Astrocyte of the spinal cord (primary cell): ENCODE measurements at regions of chr6 and their contacts with region 1.

Region 1: DNA sequence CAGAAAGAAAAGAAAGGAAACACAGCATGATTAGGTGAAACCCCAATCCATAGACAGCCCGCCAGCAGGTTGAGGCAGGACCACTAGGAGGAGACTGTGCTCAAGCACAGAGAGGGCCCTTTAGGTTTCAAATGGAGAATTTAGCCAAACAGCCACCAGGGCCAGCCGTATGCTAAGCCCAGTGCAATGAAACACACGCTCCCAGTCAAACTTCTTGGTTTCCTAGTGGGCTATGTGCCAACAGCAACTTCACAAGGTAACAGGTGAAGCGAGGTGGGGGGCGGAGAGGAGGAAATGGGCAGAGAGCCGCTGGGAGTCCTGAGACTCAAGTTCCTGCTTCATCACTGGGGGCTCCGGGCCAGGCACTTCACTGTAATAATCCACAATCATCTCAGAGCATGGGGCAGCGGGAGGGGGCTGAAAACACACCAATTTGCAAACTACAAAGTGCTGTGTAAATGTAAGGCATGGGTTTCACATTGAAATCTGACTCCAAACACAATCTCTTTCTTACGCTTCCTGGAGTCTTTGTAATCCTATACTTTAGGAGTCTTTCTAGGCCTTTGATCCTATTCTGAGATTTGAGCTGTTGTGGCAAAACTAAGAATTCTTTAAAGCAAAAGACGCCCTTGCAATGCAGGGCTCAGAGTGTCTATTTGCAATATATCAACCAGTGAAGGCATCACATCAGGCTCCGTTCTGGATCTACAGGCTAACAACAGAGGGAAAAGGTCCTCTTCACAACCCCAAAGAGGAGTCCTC is 117.3 kb downstream of the OPRM1 start:
- DNase-seq: peak; percentile 52
- H3K4me3 ChIP-seq: no peak overlapping the region
- CTCF ChIP-seq: peak; percentile 87

Region 2: GRCh38 chr6:154386848-154387717 is 230.8 kb after region 1 on chr6:
- in situ Hi-C with region 1: loop called (anchors 25 kb)
- DNase-seq: peak; percentile 90
- H3K4me3 ChIP-seq: no peak overlapping the region
- CTCF ChIP-seq: no peak